ENCODE measurements at regions of chr1 and their contacts with region 1.

Region 1: GRCh38 chr1:160607011-160607671 is 27.8 kb upstream of the CD84 start:
- DNase-seq: peak in 8 of 9 experiments; percentile 35 to 91 (median 62)
- ATAC-seq: peak; percentile 99
- H3K4me3 ChIP-seq: no peak overlapping the region
- H3K4me3 Mint-ChIP-seq: peak overlapping the region; percentile 27
- H3K27ac ChIP-seq: peak overlapping the region in 1 of 2 experiments; percentile 35
- H3K27ac Mint-ChIP-seq: peak overlapping the region; percentile 88
- H3K4me1 ChIP-seq: peaks cover 14% of the 10 kb centered on the region
- H3K4me1 Mint-ChIP-seq: peaks cover 41% of the 10 kb centered on the region
- H3K27me3 ChIP-seq: no peaks in the 10 kb centered on the region
- H3K27me3 Mint-ChIP-seq: no peaks in the 10 kb centered on the region
- CTCF ChIP-seq: peak; percentile 84

Region 2: GRCh38 chr1:160354388-160354985 is 252.7 kb before region 1 on chr1:
- CTCF ChIA-PET with region 1: interaction called, 4 read pairs
- POLR2A ChIA-PET with region 1: no interaction called
- intact Hi-C with region 1: loop called in 1 of 2 experiments (anchors 2 kb)
- DNase-seq: peak in 3 of 9 experiments; percentile 19 to 43 (median 33)
- ATAC-seq: peak; percentile 48
- H3K4me3 ChIP-seq: no peak overlapping the region
- H3K4me3 Mint-ChIP-seq: no peak overlapping the region
- H3K27ac ChIP-seq: no peak overlapping the region
- H3K27ac Mint-ChIP-seq: peak overlapping the region; percentile 37
- H3K4me1 ChIP-seq: no peaks in the 10 kb centered on the region
- H3K4me1 Mint-ChIP-seq: no peaks in the 10 kb centered on the region
- H3K27me3 ChIP-seq: no peaks in the 10 kb centered on the region
- H3K27me3 Mint-ChIP-seq: no peaks in the 10 kb centered on the region
- CTCF ChIP-seq: peak; percentile 30

Region 3: GRCh38 chr1:160466961-160467360 is 140.2 kb before region 1 on chr1:
- CTCF ChIA-PET with region 1: interaction called, 11 read pairs
- POLR2A ChIA-PET with region 1: no interaction called
- intact Hi-C with region 1: no loop called
- DNase-seq: no peak
- ATAC-seq: no peak
- H3K4me3 ChIP-seq: no peak overlapping the region
- H3K4me3 Mint-ChIP-seq: no peak overlapping the region
- H3K27ac ChIP-seq: no peak overlapping the region
- H3K27ac Mint-ChIP-seq: no peak overlapping the region
- H3K4me1 ChIP-seq: peaks cover 20% of the 10 kb centered on the region
- H3K4me1 Mint-ChIP-seq: peaks cover 32% of the 10 kb centered on the region
- H3K27me3 ChIP-seq: no peaks in the 10 kb centered on the region
- H3K27me3 Mint-ChIP-seq: no peaks in the 10 kb centered on the region
- CTCF ChIP-seq: no peak

Region 4: GRCh38 chr1:160519642-160520435 is 87.3 kb before region 1 on chr1:
- CTCF ChIA-PET with region 1: interaction called, 15 read pairs
- POLR2A ChIA-PET with region 1: interaction called, 3 read pairs
- intact Hi-C with region 1: no loop called
- DNase-seq: peak in 3 of 9 experiments; percentile 28 to 73 (median 59)
- ATAC-seq: peak; percentile 60
- H3K4me3 ChIP-seq: peak overlapping the region; percentile 69 to 81
- H3K4me3 Mint-ChIP-seq: peak overlapping the region; percentile 91
- H3K27ac ChIP-seq: peak overlapping the region; percentile 65 to 74
- H3K27ac Mint-ChIP-seq: peak overlapping the region; percentile 95
- H3K4me1 ChIP-seq: peaks cover 62% of the 10 kb centered on the region
- H3K4me1 Mint-ChIP-seq: peaks cover 93% of the 10 kb centered on the region
- H3K27me3 ChIP-seq: no peaks in the 10 kb centered on the region
- H3K27me3 Mint-ChIP-seq: no peaks in the 10 kb centered on the region
- CTCF ChIP-seq: peak; percentile 58

Region 5: DNA sequence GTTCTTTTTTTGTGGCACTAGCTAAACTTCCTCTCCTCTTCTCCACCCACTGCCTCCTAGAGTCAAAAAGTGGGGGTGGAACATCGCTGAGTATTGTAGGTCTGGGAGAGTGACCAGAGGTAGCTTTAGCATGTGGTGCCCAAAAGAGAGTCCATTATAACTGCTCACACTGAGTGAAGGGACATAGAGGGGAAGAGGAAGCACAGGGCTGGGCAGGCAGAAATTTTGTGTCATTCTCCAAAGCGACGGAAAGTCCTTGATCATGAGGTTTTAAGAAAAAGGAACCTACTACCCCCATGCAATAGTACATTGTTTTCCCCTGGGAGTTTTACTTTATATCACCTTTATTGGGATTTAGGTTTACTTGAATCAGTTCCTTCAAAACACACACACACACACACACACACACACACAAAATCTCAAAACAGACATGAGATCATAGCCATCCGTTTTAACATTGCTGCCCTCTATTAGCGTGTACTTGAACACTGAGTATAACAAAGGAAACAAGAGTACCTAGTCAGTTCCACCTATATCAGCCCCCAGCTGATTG is 32.0 kb before region 1 on chr1:
- CTCF ChIA-PET with region 1: interaction called, 22 read pairs
- POLR2A ChIA-PET with region 1: interaction called, 4 read pairs
- intact Hi-C with region 1: loop called in 1 of 2 experiments (anchors 2 kb)
- DNase-seq: peak in 2 of 9 experiments; percentile 31 to 52
- ATAC-seq: no peak
- H3K4me3 ChIP-seq: peak overlapping the region; percentile 20 to 50
- H3K4me3 Mint-ChIP-seq: peak overlapping the region; percentile 92
- H3K27ac ChIP-seq: peak overlapping the region; percentile 8 to 72
- H3K27ac Mint-ChIP-seq: peak overlapping the region; percentile 91
- H3K4me1 ChIP-seq: peaks cover 83% of the 10 kb centered on the region
- H3K4me1 Mint-ChIP-seq: peaks cover 85% of the 10 kb centered on the region
- H3K27me3 ChIP-seq: no peaks in the 10 kb centered on the region
- H3K27me3 Mint-ChIP-seq: no peaks in the 10 kb centered on the region
- CTCF ChIP-seq: no peak

Region 6: DNA sequence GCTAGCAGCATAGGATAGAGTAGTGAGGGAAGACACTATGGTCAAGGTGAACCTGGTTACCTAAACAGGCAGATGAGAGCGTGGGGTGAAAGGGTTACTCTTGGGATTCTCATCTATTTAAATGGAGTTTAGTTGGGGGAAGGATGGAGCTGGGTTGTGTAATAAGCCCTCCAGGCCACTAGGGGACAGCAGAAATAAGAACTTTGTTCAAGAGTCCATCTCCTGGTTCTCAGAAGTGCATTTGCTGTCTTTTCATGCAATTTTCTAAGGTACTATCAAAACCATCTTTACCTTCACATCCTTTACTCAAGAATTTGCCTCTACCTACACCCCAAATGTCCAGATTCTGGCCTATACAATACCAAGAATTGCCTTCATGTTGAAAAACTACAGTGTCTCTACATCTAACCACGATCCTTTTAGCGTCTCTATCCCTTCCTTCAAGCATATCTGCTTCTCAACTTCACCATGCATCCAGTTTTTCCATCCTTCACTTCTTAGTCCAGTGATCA is 11.7 kb after region 1 on chr1:
- CTCF ChIA-PET with region 1: interaction called, 15 read pairs
- POLR2A ChIA-PET with region 1: no interaction called
- intact Hi-C with region 1: no loop called
- DNase-seq: peak in 5 of 9 experiments; percentile 39 to 74 (median 43)
- ATAC-seq: peak; percentile 69
- H3K4me3 ChIP-seq: no peak overlapping the region
- H3K4me3 Mint-ChIP-seq: no peak overlapping the region
- H3K27ac ChIP-seq: no peak overlapping the region
- H3K27ac Mint-ChIP-seq: peak overlapping the region; percentile 49
- H3K4me1 ChIP-seq: peaks cover 13% of the 10 kb centered on the region
- H3K4me1 Mint-ChIP-seq: peaks cover 51% of the 10 kb centered on the region
- H3K27me3 ChIP-seq: no peaks in the 10 kb centered on the region
- H3K27me3 Mint-ChIP-seq: no peaks in the 10 kb centered on the region
- CTCF ChIP-seq: peak; percentile 77

Region 7: GRCh38 chr1:160675641-160676410 is 68.7 kb after region 1 on chr1:
- CTCF ChIA-PET with region 1: interaction called, 71 read pairs
- POLR2A ChIA-PET with region 1: interaction called, 3 read pairs
- intact Hi-C with region 1: no loop called
- DNase-seq: peak; percentile 49 to 85 (median 80)
- ATAC-seq: peak; percentile 79
- H3K4me3 ChIP-seq: no peak overlapping the region
- H3K4me3 Mint-ChIP-seq: no peak overlapping the region
- H3K27ac ChIP-seq: peak overlapping the region in 1 of 2 experiments; percentile 47
- H3K27ac Mint-ChIP-seq: peak overlapping the region; percentile 84
- H3K4me1 ChIP-seq: peaks cover 45% of the 10 kb centered on the region
- H3K4me1 Mint-ChIP-seq: peaks cover 16% of the 10 kb centered on the region
- H3K27me3 ChIP-seq: no peaks in the 10 kb centered on the region
- H3K27me3 Mint-ChIP-seq: no peaks in the 10 kb centered on the region
- CTCF ChIP-seq: peak; percentile 76

Region 8: GRCh38 chr1:160748181-160748877 is 141.2 kb after region 1 on chr1:
- CTCF ChIA-PET with region 1: no interaction called
- POLR2A ChIA-PET with region 1: no interaction called
- intact Hi-C with region 1: no loop called
- DNase-seq: no peak
- ATAC-seq: no peak
- H3K4me3 ChIP-seq: no peak overlapping the region
- H3K4me3 Mint-ChIP-seq: no peak overlapping the region
- H3K27ac ChIP-seq: peak overlapping the region in 1 of 2 experiments; percentile 38
- H3K27ac Mint-ChIP-seq: peak overlapping the region; percentile 24
- H3K4me1 ChIP-seq: peaks cover 72% of the 10 kb centered on the region
- H3K4me1 Mint-ChIP-seq: peaks cover 86% of the 10 kb centered on the region
- H3K27me3 ChIP-seq: no peaks in the 10 kb centered on the region
- H3K27me3 Mint-ChIP-seq: no peaks in the 10 kb centered on the region
- CTCF ChIP-seq: no peak

Region 9: DNA sequence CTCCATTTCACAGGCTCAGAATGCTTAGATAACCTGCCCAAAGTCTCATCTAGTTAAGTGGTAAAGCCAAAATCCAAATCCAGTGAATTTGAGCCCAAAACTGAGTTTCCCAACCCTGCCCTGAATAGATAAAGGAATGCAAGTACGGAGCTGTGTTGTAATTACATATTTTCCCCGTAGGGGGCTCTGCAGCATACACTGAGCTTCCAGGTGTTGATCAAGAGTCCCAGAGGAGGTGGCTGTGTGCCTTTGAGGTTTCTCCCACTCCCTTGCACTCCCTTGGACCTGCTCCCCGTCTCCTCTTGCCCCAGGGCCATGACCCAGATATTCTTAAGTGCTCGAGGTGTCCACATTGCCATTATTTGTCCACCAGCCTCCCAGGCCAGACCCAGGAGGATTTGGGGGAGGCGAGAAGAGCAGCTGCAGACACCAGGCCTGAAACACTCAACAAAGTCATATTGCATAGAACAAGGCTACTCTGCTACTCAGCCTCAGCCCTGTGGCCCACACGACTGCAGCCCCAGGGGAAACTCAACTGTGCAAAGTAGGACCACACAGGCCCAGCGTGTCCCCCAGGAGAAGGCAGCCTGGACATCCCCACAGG is 170.4 kb after region 1 on chr1:
- CTCF ChIA-PET with region 1: no interaction called
- POLR2A ChIA-PET with region 1: no interaction called
- intact Hi-C with region 1: no loop called
- DNase-seq: peak in 7 of 9 experiments; percentile 33 to 79 (median 52)
- ATAC-seq: peak; percentile 84
- H3K4me3 ChIP-seq: no peak overlapping the region
- H3K4me3 Mint-ChIP-seq: no peak overlapping the region
- H3K27ac ChIP-seq: no peak overlapping the region
- H3K27ac Mint-ChIP-seq: no peak overlapping the region
- H3K4me1 ChIP-seq: no peaks in the 10 kb centered on the region
- H3K4me1 Mint-ChIP-seq: peaks cover 20% of the 10 kb centered on the region
- H3K27me3 ChIP-seq: no peaks in the 10 kb centered on the region
- H3K27me3 Mint-ChIP-seq: no peaks in the 10 kb centered on the region
- CTCF ChIP-seq: peak; percentile 77

Region 10: DNA sequence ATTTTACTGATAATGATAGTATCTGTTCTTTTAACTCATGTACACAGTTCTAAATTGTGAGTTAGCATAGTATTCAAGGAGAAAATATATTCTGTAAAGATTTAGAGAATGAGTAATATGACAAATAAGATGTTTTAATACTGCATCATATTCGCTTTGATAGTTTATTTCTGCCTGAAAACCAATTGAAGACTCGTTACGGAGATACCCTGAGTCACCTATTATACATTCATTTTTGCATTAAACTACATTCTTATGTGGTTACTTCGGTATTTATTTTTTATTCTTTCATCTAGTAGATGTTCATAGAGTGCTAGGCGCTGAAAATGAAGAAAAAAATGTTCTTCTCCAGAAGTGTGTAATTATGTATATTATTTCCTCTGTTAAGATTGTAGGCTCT is 1895.8 kb after region 1 on chr1:
- CTCF ChIA-PET with region 1: no interaction called
- POLR2A ChIA-PET with region 1: no interaction called
- intact Hi-C with region 1: no loop called
- DNase-seq: no peak
- ATAC-seq: no peak
- H3K4me3 ChIP-seq: no peak overlapping the region
- H3K4me3 Mint-ChIP-seq: no peak overlapping the region
- H3K27ac ChIP-seq: no peak overlapping the region
- H3K27ac Mint-ChIP-seq: no peak overlapping the region
- H3K4me1 ChIP-seq: peaks cover 27% of the 10 kb centered on the region
- H3K4me1 Mint-ChIP-seq: peaks cover 41% of the 10 kb centered on the region
- H3K27me3 ChIP-seq: no peaks in the 10 kb centered on the region
- H3K27me3 Mint-ChIP-seq: no peaks in the 10 kb centered on the region
- CTCF ChIP-seq: no peak